ENCODE measurements at regions of chrX and their contacts with region 1.

Region 1: GRCh38 chrX:40022421-40022820 is 75.3 kb downstream of the BCOR start:
- DNase-seq: no peak
- ATAC-seq: no peak
- H3K4me3 ChIP-seq: no peak overlapping the region
- H3K4me3 Mint-ChIP-seq: peak overlapping the region in 7 of 10 donors; percentile 11 to 65 (median 26)
- H3K27ac ChIP-seq: no peak overlapping the region
- H3K27ac Mint-ChIP-seq: peak overlapping the region in 1 of 9 donors; percentile 16
- H3K4me1 ChIP-seq: peaks cover 0 to 5% of the 10 kb centered on the region in 2 donors
- H3K4me1 Mint-ChIP-seq: peaks cover 0 to 28% (median 9%) of the 10 kb centered on the region in 7 donors
- H3K27me3 ChIP-seq: no peaks in the 10 kb centered on the region
- H3K27me3 Mint-ChIP-seq: no peaks in the 10 kb centered on the region

Region 2: GRCh38 chrX:39477762-39478120 is 544.7 kb before region 1 on chrX:
- CTCF ChIA-PET with region 1: no interaction called
- POLR2A ChIA-PET with region 1: no interaction called
- intact Hi-C with region 1: no loop called
- DNase-seq: peak in 6 of 9 donors; percentile 4 to 56 (median 22)
- ATAC-seq: peak; percentile 57
- H3K4me3 ChIP-seq: no peak overlapping the region
- H3K4me3 Mint-ChIP-seq: peak overlapping the region in 2 of 10 donors; percentile 6 to 34
- H3K27ac ChIP-seq: no peak overlapping the region
- H3K27ac Mint-ChIP-seq: peak overlapping the region in 4 of 9 donors; percentile 25 to 76 (median 50)
- H3K4me1 ChIP-seq: no peaks in the 10 kb centered on the region
- H3K4me1 Mint-ChIP-seq: peaks cover 0 to 20% (median 6%) of the 10 kb centered on the region in 7 donors
- H3K27me3 ChIP-seq: no peaks in the 10 kb centered on the region
- H3K27me3 Mint-ChIP-seq: no peaks in the 10 kb centered on the region

Region 3: DNA sequence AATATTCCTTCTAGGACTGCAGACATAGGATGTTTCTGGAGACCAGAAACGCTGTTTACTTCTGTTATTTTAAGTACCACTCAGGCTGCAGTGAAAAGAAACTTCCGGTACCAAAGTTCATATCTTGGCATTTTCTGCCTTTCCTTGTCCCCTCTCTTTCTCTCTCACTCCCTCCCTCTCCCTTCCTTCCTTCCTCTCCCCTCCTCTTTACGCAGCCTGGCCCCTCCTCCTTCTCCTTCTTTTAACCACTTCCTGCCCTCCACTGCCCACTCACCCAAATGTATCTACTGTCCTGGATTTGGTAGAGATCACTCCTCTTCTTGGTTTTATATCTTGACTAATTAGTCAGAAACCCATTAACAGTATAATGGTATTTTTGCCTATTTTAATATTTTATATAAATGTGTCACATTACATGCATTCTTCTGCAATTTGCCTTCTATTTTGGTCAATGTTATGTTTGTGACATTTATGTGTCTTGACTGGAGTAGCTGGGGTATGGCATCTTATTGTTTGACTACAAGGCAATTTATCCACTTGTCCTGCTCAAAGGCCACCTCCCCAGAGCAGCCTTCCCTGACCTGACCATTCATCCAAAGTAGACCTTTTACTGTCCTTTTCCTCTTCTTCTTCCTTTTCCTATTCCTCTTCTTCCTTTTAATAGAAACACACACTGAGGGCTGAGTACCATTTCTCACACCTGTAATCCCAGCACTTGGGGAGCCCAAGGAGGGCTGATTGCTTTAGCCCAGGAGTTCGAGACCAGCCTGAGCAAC is 18.5 kb after region 1 on chrX:
- CTCF ChIA-PET with region 1: no interaction called
- POLR2A ChIA-PET with region 1: interaction called, 3 read pairs
- intact Hi-C with region 1: loop called in 1 of 2 experiments (anchors 2 kb)
- DNase-seq: no peak
- ATAC-seq: no peak
- H3K4me3 ChIP-seq: no peak overlapping the region
- H3K4me3 Mint-ChIP-seq: peak overlapping the region in 4 of 10 donors; percentile 0 to 70 (median 22)
- H3K27ac ChIP-seq: no peak overlapping the region
- H3K27ac Mint-ChIP-seq: peak overlapping the region in 3 of 9 donors; percentile 43 to 73 (median 70)
- H3K4me1 ChIP-seq: peaks cover 0 to 9% of the 10 kb centered on the region in 2 donors
- H3K4me1 Mint-ChIP-seq: peaks cover 0 to 28% (median 15%) of the 10 kb centered on the region in 7 donors
- H3K27me3 ChIP-seq: no peaks in the 10 kb centered on the region
- H3K27me3 Mint-ChIP-seq: no peaks in the 10 kb centered on the region

Region 4: GRCh38 chrX:41198406-41198805 is 1176.0 kb after region 1 on chrX:
- CTCF ChIA-PET with region 1: no interaction called
- POLR2A ChIA-PET with region 1: no interaction called
- intact Hi-C with region 1: no loop called
- DNase-seq: no peak
- ATAC-seq: no peak
- H3K4me3 ChIP-seq: no peak overlapping the region
- H3K4me3 Mint-ChIP-seq: no peak overlapping the region
- H3K27ac ChIP-seq: no peak overlapping the region
- H3K27ac Mint-ChIP-seq: no peak overlapping the region
- H3K4me1 ChIP-seq: no peaks in the 10 kb centered on the region
- H3K4me1 Mint-ChIP-seq: peaks cover 0 to 4% (median 0%) of the 10 kb centered on the region in 7 donors
- H3K27me3 ChIP-seq: no peaks in the 10 kb centered on the region
- H3K27me3 Mint-ChIP-seq: no peaks in the 10 kb centered on the region

Measured in naive thymus-derived CD4-positive, alpha-beta T cell (primary cell).